Astrocyte of the cerebellum (primary cell): ENCODE measurements at regions of chrX and their contacts with region 1.

Region 1: GRCh38 chrX:43500996-43501694 is 155.0 kb upstream of the MAOA start:
- DNase-seq: no peak
- H3K4me3 ChIP-seq: no peak overlapping the region
- CTCF ChIP-seq: no peak

Region 2: DNA sequence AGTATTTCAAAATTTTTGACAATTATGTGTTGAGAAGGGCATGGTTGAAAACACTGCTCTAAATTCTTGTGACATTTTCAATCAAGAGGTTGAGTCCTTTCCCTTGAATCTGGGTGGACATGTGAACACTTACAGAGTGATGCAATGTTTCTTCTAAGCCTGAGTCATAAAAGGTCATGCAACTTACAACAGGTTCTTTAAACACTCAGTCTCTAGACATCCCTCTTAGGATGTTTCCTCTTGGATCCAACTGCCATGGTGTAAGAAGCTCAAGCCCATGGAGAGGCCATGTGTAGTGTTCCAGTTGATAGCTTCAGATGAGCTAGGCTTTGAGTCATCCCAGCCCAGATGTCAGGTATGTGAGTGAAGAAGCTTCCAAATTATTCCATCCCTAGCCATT is 77.3 kb before region 1 on chrX:
- in situ Hi-C with region 1: loop called (anchors 5 kb)
- DNase-seq: no peak
- H3K4me3 ChIP-seq: no peak overlapping the region
- CTCF ChIP-seq: no peak

Region 3: GRCh38 chrX:43436517-43436916 is 64.6 kb before region 1 on chrX:
- in situ Hi-C with region 1: no loop called
- DNase-seq: no peak
- H3K4me3 ChIP-seq: no peak overlapping the region
- CTCF ChIP-seq: no peak